MCF 10A (cell line): ENCODE measurements at regions of chr18 and their contacts with region 1.

Region 1: DNA sequence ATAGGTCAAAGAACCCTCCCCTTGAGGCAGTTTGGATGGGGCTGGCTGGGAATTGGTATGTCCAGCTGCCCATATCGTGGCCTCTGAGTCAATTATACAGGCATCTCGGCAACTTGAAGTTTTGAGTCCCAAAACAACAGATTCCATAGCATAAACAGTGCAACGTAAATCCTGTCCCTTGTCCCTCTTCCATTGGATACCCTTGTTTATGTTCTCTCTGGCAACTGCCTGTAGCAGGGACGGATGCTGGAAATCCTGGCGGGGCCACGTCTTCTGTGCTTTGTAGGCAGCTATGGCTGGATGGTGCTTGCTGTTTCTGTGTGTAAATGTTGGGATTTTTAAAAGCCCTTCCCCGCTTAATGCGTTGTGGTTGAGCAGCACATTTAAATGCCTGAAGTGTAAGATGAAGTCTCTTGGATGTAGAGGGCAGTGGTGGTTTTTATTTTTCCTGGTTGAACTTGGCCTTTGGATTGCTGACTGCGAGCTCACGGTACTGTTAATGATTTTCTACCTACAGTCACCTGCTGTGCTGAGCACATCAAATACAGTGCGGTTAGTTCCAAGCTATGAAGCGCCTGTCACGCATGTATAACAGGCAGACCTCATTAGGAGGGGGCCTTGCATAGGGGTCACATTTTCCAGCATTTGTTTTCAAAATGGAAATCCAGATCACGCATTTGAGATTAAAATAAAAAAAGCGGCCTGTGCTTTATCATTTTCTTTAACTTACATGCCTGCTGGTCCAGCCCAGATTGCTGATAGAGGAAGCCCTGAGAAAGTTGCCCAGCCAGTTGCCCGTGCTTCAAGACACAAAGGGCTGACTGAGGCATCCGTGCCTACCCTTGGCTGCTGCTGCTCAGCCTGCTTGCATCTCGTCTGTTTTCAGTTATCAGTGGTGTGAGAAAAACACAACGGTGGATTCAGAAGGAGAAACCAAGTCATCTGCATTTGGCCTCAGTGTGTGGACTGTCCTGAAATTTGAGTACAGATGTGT is 84.7 kb downstream of the NEDD4L start:
- DNase-seq: no peak
- H3K4me3 Mint-ChIP-seq: no peak overlapping the region
- H3K27ac Mint-ChIP-seq: no peak overlapping the region
- H3K4me1 Mint-ChIP-seq: no peaks in the 10 kb centered on the region
- H3K27me3 Mint-ChIP-seq: no peaks in the 10 kb centered on the region
- CTCF ChIP-seq: no peak

Region 2: GRCh38 chr18:57286949-57287348 is 841.7 kb before region 1 on chr18:
- CTCF ChIA-PET with region 1: no interaction called
- POLR2A ChIA-PET with region 1: no interaction called
- intact Hi-C with region 1: no loop called
- DNase-seq: no peak
- H3K4me3 Mint-ChIP-seq: no peak overlapping the region
- H3K27ac Mint-ChIP-seq: no peak overlapping the region
- H3K4me1 Mint-ChIP-seq: no peaks in the 10 kb centered on the region
- H3K27me3 Mint-ChIP-seq: no peaks in the 10 kb centered on the region
- CTCF ChIP-seq: no peak

Region 3: DNA sequence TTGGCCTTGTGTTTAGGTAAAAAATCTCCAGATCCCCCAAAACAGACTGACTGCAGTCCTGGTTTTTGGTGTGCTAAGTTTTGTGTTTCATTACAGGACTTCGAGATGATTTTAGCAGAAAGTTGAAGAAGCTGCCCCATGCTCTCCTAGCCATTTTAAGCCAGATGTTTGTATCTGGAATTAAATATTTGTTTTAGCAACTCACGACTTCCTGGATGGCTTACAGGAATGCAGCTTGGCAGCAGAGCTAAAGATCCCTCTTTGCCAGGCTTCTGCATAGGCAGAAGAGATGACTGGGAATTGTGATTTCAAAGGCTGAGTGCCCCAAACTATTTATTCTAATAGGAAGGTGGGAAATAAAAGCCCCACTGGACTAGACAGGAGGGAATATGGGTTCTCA is 662.4 kb before region 1 on chr18:
- CTCF ChIA-PET with region 1: no interaction called
- POLR2A ChIA-PET with region 1: no interaction called
- intact Hi-C with region 1: no loop called
- DNase-seq: no peak
- H3K4me3 Mint-ChIP-seq: no peak overlapping the region
- H3K27ac Mint-ChIP-seq: no peak overlapping the region
- H3K4me1 Mint-ChIP-seq: no peaks in the 10 kb centered on the region
- H3K27me3 Mint-ChIP-seq: peaks cover 18% of the 10 kb centered on the region
- CTCF ChIP-seq: no peak

Region 4: GRCh38 chr18:57898506-57899124 is 230.1 kb before region 1 on chr18:
- CTCF ChIA-PET with region 1: interaction called, 5 read pairs
- POLR2A ChIA-PET with region 1: no interaction called
- intact Hi-C with region 1: loop called (anchors 5 kb)
- DNase-seq: peak; percentile 73
- H3K4me3 Mint-ChIP-seq: no peak overlapping the region
- H3K27ac Mint-ChIP-seq: no peak overlapping the region
- H3K4me1 Mint-ChIP-seq: peaks cover 27% of the 10 kb centered on the region
- H3K27me3 Mint-ChIP-seq: no peaks in the 10 kb centered on the region
- CTCF ChIP-seq: no peak

Region 5: GRCh38 chr18:58051765-58052460 is 76.8 kb before region 1 on chr18:
- CTCF ChIA-PET with region 1: interaction called, 33 read pairs
- POLR2A ChIA-PET with region 1: no interaction called
- intact Hi-C with region 1: no loop called
- DNase-seq: peak; percentile 42
- H3K4me3 Mint-ChIP-seq: no peak overlapping the region
- H3K27ac Mint-ChIP-seq: peak overlapping the region; percentile 16
- H3K4me1 Mint-ChIP-seq: peaks cover 23% of the 10 kb centered on the region
- H3K27me3 Mint-ChIP-seq: no peaks in the 10 kb centered on the region
- CTCF ChIP-seq: peak; percentile 35

Region 6: GRCh38 chr18:58161659-58162058 is 33.0 kb after region 1 on chr18:
- CTCF ChIA-PET with region 1: no interaction called
- POLR2A ChIA-PET with region 1: no interaction called
- intact Hi-C with region 1: no loop called
- DNase-seq: peak; percentile 35
- H3K4me3 Mint-ChIP-seq: no peak overlapping the region
- H3K27ac Mint-ChIP-seq: no peak overlapping the region
- H3K4me1 Mint-ChIP-seq: no peaks in the 10 kb centered on the region
- H3K27me3 Mint-ChIP-seq: no peaks in the 10 kb centered on the region
- CTCF ChIP-seq: no peak

Region 7: GRCh38 chr18:58314284-58314683 is 185.6 kb after region 1 on chr18:
- CTCF ChIA-PET with region 1: no interaction called
- POLR2A ChIA-PET with region 1: no interaction called
- intact Hi-C with region 1: no loop called
- DNase-seq: peak; percentile 95
- H3K4me3 Mint-ChIP-seq: no peak overlapping the region
- H3K27ac Mint-ChIP-seq: peak overlapping the region; percentile 83
- H3K4me1 Mint-ChIP-seq: peaks cover 49% of the 10 kb centered on the region
- H3K27me3 Mint-ChIP-seq: no peaks in the 10 kb centered on the region
- CTCF ChIP-seq: no peak